ENCODE measurements at regions of chr9 and their contacts with region 1.

Region 1: GRCh38 chr9:109349421-109349846 is 28.6 kb upstream of the EPB41L4B start:
- DNase-seq: no peak
- H3K4me3 Mint-ChIP-seq: no peak overlapping the region
- H3K27ac Mint-ChIP-seq: no peak overlapping the region
- H3K4me1 Mint-ChIP-seq: peaks cover 5% of the 10 kb centered on the region
- H3K27me3 Mint-ChIP-seq: no peaks in the 10 kb centered on the region
- CTCF ChIP-seq: no peak

Region 2: GRCh38 chr9:108924466-108924865 is 425.0 kb before region 1 on chr9:
- CTCF ChIA-PET with region 1: no interaction called
- intact Hi-C with region 1: no loop called
- DNase-seq: no peak
- H3K4me3 Mint-ChIP-seq: no peak overlapping the region
- H3K27ac Mint-ChIP-seq: no peak overlapping the region
- H3K4me1 Mint-ChIP-seq: no peaks in the 10 kb centered on the region
- H3K27me3 Mint-ChIP-seq: no peaks in the 10 kb centered on the region
- CTCF ChIP-seq: no peak

Region 3: GRCh38 chr9:109132567-109133021 is 216.8 kb before region 1 on chr9:
- CTCF ChIA-PET with region 1: no interaction called
- intact Hi-C with region 1: no loop called
- DNase-seq: no peak
- H3K4me3 Mint-ChIP-seq: no peak overlapping the region
- H3K27ac Mint-ChIP-seq: no peak overlapping the region
- H3K4me1 Mint-ChIP-seq: no peaks in the 10 kb centered on the region
- H3K27me3 Mint-ChIP-seq: no peaks in the 10 kb centered on the region
- CTCF ChIP-seq: no peak

Region 4: DNA sequence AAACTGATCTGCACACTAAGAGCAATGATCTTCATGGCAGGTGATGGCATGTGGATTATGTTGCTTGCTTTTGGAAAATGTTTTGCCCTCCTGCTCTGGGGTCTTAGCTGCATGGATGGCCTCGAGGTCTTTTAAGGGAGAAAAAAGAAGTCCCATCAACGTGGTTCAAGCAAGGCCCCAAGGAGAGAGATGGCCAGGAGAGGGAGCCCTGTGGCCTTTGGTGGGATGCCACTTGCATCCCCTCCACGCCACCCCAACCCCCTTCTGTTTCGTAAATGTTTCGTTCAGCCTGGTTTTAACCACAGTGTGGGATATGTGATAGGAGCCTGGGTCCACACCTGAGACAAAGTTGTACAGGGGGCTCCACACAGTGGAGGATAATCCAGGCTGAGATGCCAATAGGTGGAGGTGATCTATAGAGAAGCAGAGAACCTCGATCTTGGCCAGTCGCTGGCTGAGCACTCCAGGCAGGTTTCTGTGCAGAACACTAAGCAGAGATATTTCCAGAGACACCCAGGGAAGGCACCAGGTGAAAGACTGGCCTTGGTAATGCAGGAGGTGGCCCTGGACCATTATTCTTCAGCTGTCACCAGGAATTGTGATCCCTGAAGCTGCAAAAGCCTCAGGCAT is 156.6 kb before region 1 on chr9:
- CTCF ChIA-PET with region 1: no interaction called
- intact Hi-C with region 1: loop called (anchors 5 kb)
- DNase-seq: peak; percentile 28
- H3K4me3 Mint-ChIP-seq: no peak overlapping the region
- H3K27ac Mint-ChIP-seq: no peak overlapping the region
- H3K4me1 Mint-ChIP-seq: no peaks in the 10 kb centered on the region
- H3K27me3 Mint-ChIP-seq: no peaks in the 10 kb centered on the region
- CTCF ChIP-seq: peak; percentile 34

Region 5: DNA sequence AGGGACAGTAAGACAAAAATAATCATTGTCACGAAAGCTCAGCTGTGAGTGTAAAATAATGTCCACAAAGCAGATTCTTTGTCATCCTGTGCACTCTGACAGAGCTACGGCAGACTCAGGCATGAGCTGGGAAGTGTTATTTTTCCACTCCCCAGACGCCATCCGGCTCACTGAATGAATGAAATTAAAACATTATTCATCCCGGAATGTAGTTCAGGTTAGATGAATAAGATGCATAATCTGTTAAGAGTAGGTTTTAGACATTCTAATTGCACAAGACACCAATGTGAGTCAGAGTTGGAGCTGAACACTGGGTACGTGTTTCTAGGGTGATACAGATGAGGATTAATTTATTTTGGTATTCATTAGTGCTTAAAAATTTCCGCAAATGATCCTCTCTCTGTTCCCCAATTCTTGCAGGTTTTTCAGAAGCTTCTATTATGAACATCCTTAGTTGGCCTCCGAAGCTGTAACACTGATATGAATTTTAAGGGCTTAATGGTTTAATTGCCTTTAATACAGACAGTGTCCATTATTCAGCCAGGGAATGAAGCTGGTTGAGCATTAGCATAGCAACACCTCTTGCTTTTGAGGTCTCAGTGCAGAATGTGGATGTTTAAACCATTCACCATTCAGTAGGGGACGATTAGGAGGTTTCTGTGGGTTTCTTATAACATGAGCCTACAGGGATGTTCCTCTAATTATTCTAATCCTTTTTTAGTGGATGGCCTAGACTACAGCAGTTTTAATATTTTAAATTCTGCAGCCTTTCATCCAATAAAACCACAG is 116.8 kb before region 1 on chr9:
- CTCF ChIA-PET with region 1: no interaction called
- intact Hi-C with region 1: no loop called
- DNase-seq: no peak
- H3K4me3 Mint-ChIP-seq: no peak overlapping the region
- H3K27ac Mint-ChIP-seq: no peak overlapping the region
- H3K4me1 Mint-ChIP-seq: no peaks in the 10 kb centered on the region
- H3K27me3 Mint-ChIP-seq: peaks cover 14% of the 10 kb centered on the region
- CTCF ChIP-seq: no peak

Region 6: GRCh38 chr9:109244157-109245132 is 105.0 kb before region 1 on chr9:
- CTCF ChIA-PET with region 1: no interaction called
- intact Hi-C with region 1: loop called (anchors 10 kb)
- DNase-seq: peak; percentile 66
- H3K4me3 Mint-ChIP-seq: no peak overlapping the region
- H3K27ac Mint-ChIP-seq: no peak overlapping the region
- H3K4me1 Mint-ChIP-seq: no peaks in the 10 kb centered on the region
- H3K27me3 Mint-ChIP-seq: no peaks in the 10 kb centered on the region
- CTCF ChIP-seq: peak; percentile 86

Region 7: GRCh38 chr9:109307380-109308240 is 41.8 kb before region 1 on chr9:
- CTCF ChIA-PET with region 1: no interaction called
- intact Hi-C with region 1: no loop called
- DNase-seq: no peak
- H3K4me3 Mint-ChIP-seq: no peak overlapping the region
- H3K27ac Mint-ChIP-seq: no peak overlapping the region
- H3K4me1 Mint-ChIP-seq: peaks cover 34% of the 10 kb centered on the region
- H3K27me3 Mint-ChIP-seq: no peaks in the 10 kb centered on the region
- CTCF ChIP-seq: no peak

Region 8: DNA sequence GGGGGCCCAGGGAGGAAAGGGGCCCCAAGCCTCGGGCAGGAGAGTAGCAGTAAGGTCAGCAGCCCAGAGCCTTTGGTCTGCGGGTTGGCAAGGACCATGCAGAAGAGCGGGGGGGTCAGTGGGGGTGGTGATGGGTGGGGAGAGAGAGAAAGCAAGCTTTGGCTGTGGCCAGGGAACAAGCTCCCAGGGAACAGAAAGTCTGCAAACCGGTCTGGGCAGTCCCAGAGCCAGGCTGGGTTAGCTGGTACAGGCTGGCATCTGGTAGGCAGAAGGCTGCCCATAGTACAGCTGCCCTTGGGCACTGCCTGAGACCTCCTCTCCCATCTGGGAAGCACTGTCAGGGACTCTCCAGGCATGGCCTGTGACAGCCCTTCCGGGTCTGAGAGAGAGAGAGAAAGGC is 18.1 kb before region 1 on chr9:
- CTCF ChIA-PET with region 1: interaction called, 19 read pairs
- intact Hi-C with region 1: no loop called
- DNase-seq: peak; percentile 82
- H3K4me3 Mint-ChIP-seq: no peak overlapping the region
- H3K27ac Mint-ChIP-seq: peak overlapping the region; percentile 56
- H3K4me1 Mint-ChIP-seq: peaks cover 47% of the 10 kb centered on the region
- H3K27me3 Mint-ChIP-seq: no peaks in the 10 kb centered on the region
- CTCF ChIP-seq: no peak

Measured in Calu3 (cell line).